Dorsolateral prefrontal cortex (tissue), 120 donors: ENCODE measurements at regions of chr4 and their contacts with region 1.

Region 1: GRCh38 chr4:8274765-8275547 is 5.4 kb downstream of the HTRA3 start:
- DNase-seq: peak in 9 of 10 donors; percentile 50 to 80 (median 71)
- H3K4me3 ChIP-seq: no peak overlapping the region
- H3K27ac ChIP-seq: peak overlapping the region in 3 of 59 donors; percentile 0 to 18 (median 14)
- H3K27me3 ChIP-seq: peaks cover 0 to 21% (median 11%) of the 10 kb centered on the region in 45 donors
- CTCF ChIP-seq: peak in 50 of 56 donors; percentile 14 to 72 (median 51)

Region 2: GRCh38 chr4:8351931-8352367 is 77.0 kb after region 1 on chr4:
- intact Hi-C with region 1: loop called in 1 of 2 experiments (anchors 5 kb)
- DNase-seq: peak in 7 of 10 donors; percentile 17 to 39 (median 28)
- H3K4me3 ChIP-seq: no peak overlapping the region
- H3K27ac ChIP-seq: peak overlapping the region in 7 of 59 donors; percentile 3 to 44 (median 26)
- H3K27me3 ChIP-seq: no peaks in the 10 kb centered on the region
- CTCF ChIP-seq: no peak